ENCODE measurements at regions of chr7 and their contacts with region 1.

Region 1: GRCh38 chr7:95686109-95686508 is 86.2 kb upstream of the DYNC1I1 start:
- DNase-seq: peak in 4 of 6 donors; percentile 40 to 68 (median 50)
- ATAC-seq: peak; percentile 73 to 83 (median 80)
- H3K4me3 ChIP-seq: no peak overlapping the region
- H3K27ac ChIP-seq: no peak overlapping the region
- H3K4me1 ChIP-seq: no peaks in the 10 kb centered on the region
- H3K27me3 ChIP-seq: no peaks in the 10 kb centered on the region
- CTCF ChIP-seq: peak in 3 of 4 donors; percentile 21 to 30 (median 26)

Region 2: GRCh38 chr7:95324431-95324830 is 361.7 kb before region 1 on chr7 and contains the start of gene PON1:
- intact Hi-C with region 1: no loop called
- DNase-seq: peak in 3 of 6 donors; percentile 7 to 56 (median 55)
- ATAC-seq: peak in 2 of 4 donors; percentile 75 to 81
- H3K4me3 ChIP-seq: no peak within 1 kb of the TSS
- H3K27ac ChIP-seq: no peak within 1 kb of the TSS
- H3K4me1 ChIP-seq: no peaks in the 10 kb centered on the region
- H3K27me3 ChIP-seq: no peaks in the 10 kb centered on the region
- CTCF ChIP-seq: no peak
- total RNA-seq, gene PON1: 0.35 to 0.64 (median 0.51) TPM in 3 of 6 donors, not detected in the others

Region 3: GRCh38 chr7:95511716-95512260 is 174.3 kb before region 1 on chr7:
- intact Hi-C with region 1: loop called in 1 of 3 experiments (anchors 5 kb)
- DNase-seq: peak in 5 of 6 donors; percentile 48 to 78 (median 58)
- ATAC-seq: peak; percentile 93 to 99 (median 95)
- H3K4me3 ChIP-seq: no peak overlapping the region
- H3K27ac ChIP-seq: no peak overlapping the region
- H3K4me1 ChIP-seq: no peaks in the 10 kb centered on the region
- H3K27me3 ChIP-seq: no peaks in the 10 kb centered on the region
- CTCF ChIP-seq: peak; percentile 70 to 86 (median 80)

Region 4: DNA sequence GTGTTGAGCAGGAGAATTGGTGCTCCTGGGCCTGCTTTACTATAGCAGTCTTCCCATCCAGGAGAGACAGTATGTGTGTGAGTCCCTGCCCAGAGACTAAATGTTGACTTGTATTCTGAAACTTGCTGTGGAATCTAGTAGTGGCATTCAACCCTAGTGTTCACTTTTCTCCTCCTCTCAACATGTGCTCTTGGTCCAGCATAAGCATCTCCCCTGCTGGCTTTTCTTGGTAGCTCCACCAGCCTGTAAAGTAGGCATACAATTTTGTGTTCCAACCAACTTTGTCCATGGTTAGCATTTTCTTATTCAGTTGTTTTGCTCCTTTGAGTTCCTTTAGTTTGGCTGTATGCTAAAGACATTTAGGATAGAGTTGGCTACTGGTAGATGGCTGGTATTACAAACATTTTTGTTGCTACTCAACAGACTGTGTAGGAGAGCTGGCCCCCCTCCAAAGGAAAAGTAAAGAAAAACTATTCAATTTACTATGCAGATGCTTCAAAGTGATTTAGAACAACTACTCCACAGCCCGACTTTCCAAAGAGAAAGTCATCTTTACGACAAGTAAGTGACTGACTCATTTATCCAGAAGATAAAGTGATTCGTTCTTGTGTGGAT is 154.4 kb before region 1 on chr7:
- intact Hi-C with region 1: loop called (anchors 5 to 10 kb)
- DNase-seq: no peak
- ATAC-seq: no peak
- H3K4me3 ChIP-seq: no peak overlapping the region
- H3K27ac ChIP-seq: no peak overlapping the region
- H3K4me1 ChIP-seq: peaks cover 0 to 5% (median 0%) of the 10 kb centered on the region in 3 donors
- H3K27me3 ChIP-seq: no peaks in the 10 kb centered on the region
- CTCF ChIP-seq: no peak

Region 5: GRCh38 chr7:95811846-95812445 is 125.8 kb after region 1 on chr7:
- intact Hi-C with region 1: no loop called
- DNase-seq: no peak
- ATAC-seq: no peak
- H3K4me3 ChIP-seq: no peak overlapping the region
- H3K27ac ChIP-seq: no peak overlapping the region
- H3K4me1 ChIP-seq: no peaks in the 10 kb centered on the region
- H3K27me3 ChIP-seq: no peaks in the 10 kb centered on the region
- CTCF ChIP-seq: no peak

Measured in pancreas (tissue), 10 donors.